ENCODE measurements at regions of chr2 and their contacts with region 1.

Region 1: GRCh38 chr2:72579591-72580180 is 246.1 kb downstream of the EXOC6B start:
- DNase-seq: no peak
- ATAC-seq: peak; percentile 63
- H3K4me3 ChIP-seq: no peak overlapping the region
- H3K27ac ChIP-seq: no peak overlapping the region
- H3K4me1 ChIP-seq: peaks cover 6% of the 10 kb centered on the region
- H3K27me3 ChIP-seq: no peaks in the 10 kb centered on the region
- CTCF ChIP-seq: peak; percentile 72

Region 2: GRCh38 chr2:71923887-71924533 is 655.7 kb before region 1 on chr2:
- intact Hi-C with region 1: loop called (anchors 5 kb)
- DNase-seq: peak; percentile 68
- ATAC-seq: peak; percentile 75
- H3K4me3 ChIP-seq: no peak overlapping the region
- H3K27ac ChIP-seq: no peak overlapping the region
- H3K4me1 ChIP-seq: no peaks in the 10 kb centered on the region
- H3K27me3 ChIP-seq: no peaks in the 10 kb centered on the region
- CTCF ChIP-seq: peak; percentile 81

Region 3: GRCh38 chr2:72062336-72062735 is 517.4 kb before region 1 on chr2:
- intact Hi-C with region 1: no loop called
- DNase-seq: no peak
- ATAC-seq: no peak
- H3K4me3 ChIP-seq: no peak overlapping the region
- H3K27ac ChIP-seq: no peak overlapping the region
- H3K4me1 ChIP-seq: no peaks in the 10 kb centered on the region
- H3K27me3 ChIP-seq: no peaks in the 10 kb centered on the region
- CTCF ChIP-seq: no peak

Measured in upper lobe of right lung (tissue), 1 donor.